IMR-90 (cell line): ENCODE measurements at regions of chr18 and their contacts with region 1.

Region 1: GRCh38 chr18:53567929-53568574 is 656.4 kb downstream of the MBD2 start:
- DNase-seq: peak; percentile 13
- ATAC-seq: peak; percentile 32; the same call in 1 of the 2 replicates
- H3K4me3 ChIP-seq: no peak overlapping the region
- H3K27ac ChIP-seq: no peak overlapping the region
- H3K4me1 ChIP-seq: no peaks in the 10 kb centered on the region
- H3K27me3 ChIP-seq: no peaks in the 10 kb centered on the region
- CTCF ChIP-seq: peak; percentile 49
- POLR2A ChIP-seq: no peak
- RAD21 ChIP-seq: peak; percentile 24; the same call in 1 of the 2 replicates

Region 2: DNA sequence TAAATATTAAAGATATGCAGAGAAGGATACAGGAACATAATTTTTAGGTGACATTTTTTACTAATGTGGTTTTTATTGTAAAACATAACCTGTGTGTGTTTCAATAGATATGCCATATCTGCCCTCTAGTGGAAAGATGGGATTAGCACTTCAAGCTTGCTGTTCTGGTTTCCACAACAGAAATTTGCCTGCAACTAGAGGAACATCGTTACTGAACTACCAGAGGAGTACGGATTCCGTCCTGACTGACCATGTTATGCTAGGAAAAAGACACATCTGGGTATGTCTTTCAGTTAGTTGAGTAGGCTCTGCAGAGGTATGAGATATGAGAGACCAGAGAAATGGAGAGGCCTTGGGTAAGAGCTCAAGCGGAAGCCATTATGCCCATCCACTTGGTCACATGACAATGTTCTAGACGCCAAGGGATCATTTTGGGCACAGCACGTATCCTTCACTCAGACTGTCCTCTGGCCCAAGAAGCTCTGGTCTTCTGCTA is 551.5 kb after region 1 on chr18:
- CTCF ChIA-PET with region 1: interaction called, 4 read pairs
- POLR2A ChIA-PET with region 1: no interaction called
- dilution Hi-C with region 1: no loop called
- in situ Hi-C with region 1: no loop called
- intact Hi-C with region 1: loop called (anchors 2 kb)
- DNase-seq: peak; percentile 59
- ATAC-seq: peak; percentile 80
- H3K4me3 ChIP-seq: no peak overlapping the region
- H3K27ac ChIP-seq: no peak overlapping the region
- H3K4me1 ChIP-seq: no peaks in the 10 kb centered on the region
- H3K27me3 ChIP-seq: no peaks in the 10 kb centered on the region; the same call in 1 of the 2 replicates
- CTCF ChIP-seq: peak; percentile 73
- POLR2A ChIP-seq: no peak
- RAD21 ChIP-seq: peak; percentile 71

Region 3: GRCh38 chr18:54127759-54128378 is 559.8 kb after region 1 on chr18:
- CTCF ChIA-PET with region 1: interaction called, 4 read pairs
- POLR2A ChIA-PET with region 1: no interaction called
- dilution Hi-C with region 1: no loop called
- in situ Hi-C with region 1: loop called (anchors 5 kb)
- intact Hi-C with region 1: no loop called
- DNase-seq: peak; percentile 54
- ATAC-seq: peak; percentile 98
- H3K4me3 ChIP-seq: no peak overlapping the region
- H3K27ac ChIP-seq: no peak overlapping the region
- H3K4me1 ChIP-seq: no peaks in the 10 kb centered on the region
- H3K27me3 ChIP-seq: no peaks in the 10 kb centered on the region
- CTCF ChIP-seq: peak; percentile 69
- POLR2A ChIP-seq: no peak
- RAD21 ChIP-seq: peak; percentile 70